ENCODE measurements at regions of chr13 and their contacts with region 1.

Region 1: DNA sequence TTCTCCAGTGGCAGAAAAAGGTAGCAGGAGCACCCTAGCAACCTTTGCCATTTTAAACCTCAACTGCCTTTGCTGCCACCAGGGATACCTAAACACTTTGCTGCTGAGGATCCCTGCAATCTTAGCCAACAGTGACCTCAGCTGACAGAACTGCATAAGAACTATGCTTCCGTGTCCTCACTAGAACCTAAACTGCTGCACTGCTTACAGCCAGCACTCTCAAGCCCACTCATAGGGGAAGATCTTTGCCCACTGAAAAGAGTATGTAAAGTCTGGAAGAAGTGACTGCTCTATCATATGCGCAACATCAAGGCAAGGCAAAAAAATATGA is 270.0 kb upstream of the PCDH20 start:
- DNase-seq: peak; percentile 46
- H3K4me3 Mint-ChIP-seq: no peak overlapping the region
- H3K27ac Mint-ChIP-seq: no peak overlapping the region
- H3K4me1 Mint-ChIP-seq: no peaks in the 10 kb centered on the region
- H3K27me3 Mint-ChIP-seq: no peaks in the 10 kb centered on the region
- CTCF ChIP-seq: peak; percentile 13

Region 2: DNA sequence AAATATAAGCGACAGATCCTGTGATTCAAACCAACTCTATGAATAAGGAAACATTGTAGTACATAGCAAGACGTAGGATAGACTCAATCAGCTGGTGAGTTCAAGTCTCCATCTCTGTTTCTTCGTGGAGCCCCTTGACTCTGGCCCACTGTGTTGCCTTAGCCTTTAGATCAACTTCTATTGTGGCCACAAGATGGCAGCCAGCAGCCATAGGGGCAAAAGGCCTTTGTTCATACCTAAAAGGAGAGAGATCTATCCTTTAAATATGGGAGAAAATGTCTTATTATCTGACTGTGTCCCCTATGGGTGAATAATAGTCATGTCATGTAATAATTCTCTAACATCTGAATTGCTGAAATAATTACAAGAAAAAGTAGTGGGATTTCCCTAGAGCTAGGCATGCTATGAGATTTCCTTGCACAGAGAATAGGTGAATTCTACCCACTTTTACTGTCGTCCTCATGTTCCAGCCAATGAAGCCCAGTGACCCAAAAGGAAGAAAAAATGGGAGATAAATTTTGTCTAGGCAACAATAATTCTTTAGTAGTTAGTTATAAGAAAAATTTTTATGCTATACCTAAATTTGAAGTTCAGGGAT is 399.4 kb before region 1 on chr13:
- CTCF ChIA-PET with region 1: no interaction called
- POLR2A ChIA-PET with region 1: no interaction called
- intact Hi-C with region 1: loop called (anchors 5 kb)
- DNase-seq: peak; percentile 45
- H3K4me3 Mint-ChIP-seq: no peak overlapping the region
- H3K27ac Mint-ChIP-seq: no peak overlapping the region
- H3K4me1 Mint-ChIP-seq: no peaks in the 10 kb centered on the region
- H3K27me3 Mint-ChIP-seq: no peaks in the 10 kb centered on the region
- CTCF ChIP-seq: no peak

Region 3: GRCh38 chr13:61850794-61851193 is 165.1 kb after region 1 on chr13:
- CTCF ChIA-PET with region 1: no interaction called
- POLR2A ChIA-PET with region 1: no interaction called
- intact Hi-C with region 1: no loop called
- DNase-seq: no peak
- H3K4me3 Mint-ChIP-seq: no peak overlapping the region
- H3K27ac Mint-ChIP-seq: no peak overlapping the region
- H3K4me1 Mint-ChIP-seq: no peaks in the 10 kb centered on the region
- H3K27me3 Mint-ChIP-seq: no peaks in the 10 kb centered on the region
- CTCF ChIP-seq: no peak